Dorsolateral prefrontal cortex (tissue), 120 donors: ENCODE measurements at regions of chr16 and their contacts with region 1.

Region 1: DNA sequence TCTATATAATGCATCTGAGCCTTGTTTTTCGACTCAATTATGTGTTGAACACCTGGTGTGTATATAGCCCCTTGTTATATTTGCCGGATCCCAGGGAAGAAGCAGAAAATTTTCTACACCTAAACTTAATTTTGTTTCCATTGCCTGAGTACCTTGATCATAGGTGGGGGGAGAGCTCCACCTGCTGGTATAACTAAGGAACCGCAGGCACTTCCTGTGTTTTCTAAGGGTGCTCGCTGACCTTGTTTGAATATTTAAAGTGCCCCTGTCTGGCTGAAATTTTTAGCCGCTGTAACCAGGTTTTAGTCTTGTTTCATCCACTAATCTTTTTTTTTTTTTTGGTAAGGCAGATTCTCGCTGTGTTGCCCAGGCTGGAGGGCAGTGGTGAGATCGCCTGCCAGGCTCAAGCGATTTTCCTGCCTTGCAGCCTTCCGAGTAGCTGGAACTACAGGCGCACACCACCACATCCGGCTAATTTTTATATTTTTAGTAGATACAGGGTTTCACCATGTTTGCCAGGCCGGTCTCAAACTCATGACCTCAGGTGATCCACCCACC is 6.5 kb upstream of the NUBP1 start:
- DNase-seq: peak in 5 of 10 donors; percentile 59 to 67 (median 61)
- H3K4me3 ChIP-seq: peak overlapping the region in 29 of 59 donors; percentile 2 to 45 (median 25)
- H3K27ac ChIP-seq: peak overlapping the region in 22 of 59 donors; percentile 1 to 71 (median 55)
- H3K27me3 ChIP-seq: no peaks in the 10 kb centered on the region
- CTCF ChIP-seq: peak; percentile 89 to 98 (median 95)

Region 2: GRCh38 chr16:10256784-10257641 is 480.1 kb before region 1 on chr16:
- intact Hi-C with region 1: loop called (anchors 10 kb)
- DNase-seq: peak in 2 of 10 donors; percentile 10 to 11
- H3K4me3 ChIP-seq: peak overlapping the region in 1 of 59 donors; percentile 22
- H3K27ac ChIP-seq: no peak overlapping the region
- H3K27me3 ChIP-seq: peaks cover 0 to 1% (median 0%) of the 10 kb centered on the region in 45 donors
- CTCF ChIP-seq: peak in 55 of 56 donors; percentile 26 to 80 (median 66)

Region 3: GRCh38 chr16:10314811-10315210 is 422.3 kb before region 1 on chr16:
- intact Hi-C with region 1: loop called in 1 of 2 experiments (anchors 10 kb)
- DNase-seq: no peak
- H3K4me3 ChIP-seq: no peak overlapping the region
- H3K27ac ChIP-seq: no peak overlapping the region
- H3K27me3 ChIP-seq: no peaks in the 10 kb centered on the region
- CTCF ChIP-seq: peak in 45 of 56 donors; percentile 10 to 65 (median 34)

Region 4: GRCh38 chr16:10521681-10522274 is 215.4 kb before region 1 on chr16:
- intact Hi-C with region 1: loop called (anchors 2 kb)
- DNase-seq: peak in 6 of 10 donors; percentile 31 to 73 (median 52)
- H3K4me3 ChIP-seq: no peak overlapping the region
- H3K27ac ChIP-seq: no peak overlapping the region
- H3K27me3 ChIP-seq: no peaks in the 10 kb centered on the region
- CTCF ChIP-seq: peak; percentile 30 to 99 (median 82)